BJ (cell line): ENCODE measurements at regions of chr17 and their contacts with region 1.

Region 1: GRCh38 chr17:4986951-4987766 is at the start of gene CAMTA2:
- DNase-seq: no peak
- H3K4me3 ChIP-seq: peak within 1 kb of the TSS; percentile 60
- H3K27me3 ChIP-seq: no peaks in the 10 kb centered on the region
- CTCF ChIP-seq: peak; percentile 52
- polyA plus RNA-seq, gene CAMTA2: 40.6 and 65.6 TPM in 2 replicates

Region 2: GRCh38 chr17:4997302-4998026 is 10.3 kb after region 1 on chr17 and contains the starts of genes INCA1 and KIF1C:
- CTCF ChIA-PET with region 1: interaction called, 15 read pairs
- POLR2A ChIA-PET with region 1: no interaction called
- DNase-seq: peak; percentile 28
- H3K4me3 ChIP-seq: peak within 1 kb of the TSS; percentile 95
- H3K27me3 ChIP-seq: no peaks in the 10 kb centered on the region
- CTCF ChIP-seq: 0 out of 2 replicates have a peak, but pooled peaks have one; percentile 4
- polyA plus RNA-seq, gene INCA1: 0.55 and 1.3 TPM in 2 replicates
- polyA plus RNA-seq, gene KIF1C: 72.8 and 81.6 TPM in 2 replicates